Activated CD8-positive, alpha-beta T cell treated with anti-CD3 and anti-CD28 coated beads, Interleukin-2, amount 10 ng/mL, durations not matched to agents 7 days and 5 days (primary cell): ENCODE measurements at regions of chr11 and their contacts with region 1.

Region 1: DNA sequence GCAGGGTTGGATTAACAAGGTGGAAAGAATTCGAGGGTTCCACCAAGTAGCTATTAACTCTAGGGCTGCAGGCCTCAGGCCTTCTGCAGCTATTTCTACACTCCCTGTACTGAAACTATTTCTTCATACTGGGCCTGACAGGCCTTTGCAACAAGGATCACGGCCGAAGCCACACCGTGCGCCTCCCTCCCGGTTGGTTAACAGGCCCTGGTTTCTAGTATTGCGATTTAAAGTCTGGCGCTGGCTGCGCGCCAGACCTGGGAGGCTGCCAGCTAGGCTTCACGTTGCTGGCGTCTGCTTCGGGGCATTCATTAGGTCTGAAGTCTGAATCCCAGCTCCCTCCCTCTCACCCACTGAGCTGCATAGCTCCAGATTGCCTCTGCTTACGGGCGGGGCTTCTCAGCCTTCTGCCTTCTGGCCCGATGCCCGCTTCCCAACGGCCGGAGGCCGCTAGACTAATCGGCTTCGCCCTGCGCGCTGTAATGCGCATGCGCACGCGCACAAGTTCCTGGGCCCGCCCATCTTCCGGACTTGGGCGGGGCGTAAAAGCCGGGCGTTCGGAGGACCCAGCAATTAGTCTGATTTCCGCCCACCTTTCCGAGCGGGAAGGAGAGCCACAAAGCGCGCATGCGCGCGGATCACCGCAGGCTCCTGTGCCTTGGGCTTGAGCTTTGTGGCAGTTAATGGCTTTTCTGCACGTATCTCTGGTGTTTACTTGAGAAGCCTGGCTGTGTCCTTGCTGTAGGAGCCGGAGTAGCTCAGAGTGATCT is 1.6 kb downstream of the LDHA start:
- DNase-seq: peak; percentile 97
- ATAC-seq: peak; percentile 66
- H3K4me3 Mint-ChIP-seq: peak overlapping the region; percentile 99
- H3K27ac Mint-ChIP-seq: peak overlapping the region; percentile 98
- H3K4me1 Mint-ChIP-seq: peaks cover 56% of the 10 kb centered on the region
- H3K27me3 Mint-ChIP-seq: no peaks in the 10 kb centered on the region

Region 2: GRCh38 chr11:17939542-17939941 is 456.4 kb before region 1 on chr11:
- CTCF ChIA-PET with region 1: no interaction called
- POLR2A ChIA-PET with region 1: no interaction called
- DNase-seq: no peak
- ATAC-seq: no peak
- H3K4me3 Mint-ChIP-seq: no peak overlapping the region
- H3K27ac Mint-ChIP-seq: no peak overlapping the region
- H3K4me1 Mint-ChIP-seq: no peaks in the 10 kb centered on the region
- H3K27me3 Mint-ChIP-seq: no peaks in the 10 kb centered on the region

Region 3: GRCh38 chr11:18383388-18384156 is 12.3 kb before region 1 on chr11:
- CTCF ChIA-PET with region 1: interaction called, 33 read pairs
- POLR2A ChIA-PET with region 1: interaction called, 152 read pairs
- DNase-seq: peak; percentile 82
- ATAC-seq: peak; percentile 78
- H3K4me3 Mint-ChIP-seq: peak overlapping the region; percentile 69
- H3K27ac Mint-ChIP-seq: peak overlapping the region; percentile 99
- H3K4me1 Mint-ChIP-seq: peaks cover 51% of the 10 kb centered on the region
- H3K27me3 Mint-ChIP-seq: no peaks in the 10 kb centered on the region

Region 4: GRCh38 chr11:18408558-18409242 is 12.8 kb after region 1 on chr11:
- CTCF ChIA-PET with region 1: interaction called, 5 read pairs
- POLR2A ChIA-PET with region 1: interaction called, 19 read pairs
- DNase-seq: no peak
- ATAC-seq: no peak
- H3K4me3 Mint-ChIP-seq: no peak overlapping the region
- H3K27ac Mint-ChIP-seq: no peak overlapping the region
- H3K4me1 Mint-ChIP-seq: peaks cover 26% of the 10 kb centered on the region
- H3K27me3 Mint-ChIP-seq: peaks cover 2% of the 10 kb centered on the region

Region 5: DNA sequence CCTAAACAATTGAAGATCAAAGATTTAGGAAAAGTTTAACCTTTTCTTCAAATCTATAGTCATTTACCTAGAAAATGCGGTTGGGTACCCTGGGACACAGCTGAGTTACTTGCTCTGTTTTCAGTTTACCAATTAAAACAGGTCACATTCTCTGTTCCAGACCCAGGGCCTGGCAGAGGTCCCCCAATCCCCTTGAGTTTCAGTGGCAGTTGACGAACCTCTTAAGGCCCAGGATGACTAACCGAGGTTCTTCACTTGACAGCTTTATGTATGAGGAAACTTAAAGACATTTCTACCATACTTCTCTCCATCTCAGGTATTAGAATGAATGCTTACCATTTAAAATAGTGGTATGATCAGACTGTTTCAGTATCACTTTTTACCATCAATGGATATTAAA is 76.1 kb after region 1 on chr11:
- CTCF ChIA-PET with region 1: no interaction called
- POLR2A ChIA-PET with region 1: no interaction called
- DNase-seq: no peak
- ATAC-seq: no peak
- H3K4me3 Mint-ChIP-seq: no peak overlapping the region
- H3K27ac Mint-ChIP-seq: no peak overlapping the region
- H3K4me1 Mint-ChIP-seq: no peaks in the 10 kb centered on the region
- H3K27me3 Mint-ChIP-seq: no peaks in the 10 kb centered on the region

Region 6: DNA sequence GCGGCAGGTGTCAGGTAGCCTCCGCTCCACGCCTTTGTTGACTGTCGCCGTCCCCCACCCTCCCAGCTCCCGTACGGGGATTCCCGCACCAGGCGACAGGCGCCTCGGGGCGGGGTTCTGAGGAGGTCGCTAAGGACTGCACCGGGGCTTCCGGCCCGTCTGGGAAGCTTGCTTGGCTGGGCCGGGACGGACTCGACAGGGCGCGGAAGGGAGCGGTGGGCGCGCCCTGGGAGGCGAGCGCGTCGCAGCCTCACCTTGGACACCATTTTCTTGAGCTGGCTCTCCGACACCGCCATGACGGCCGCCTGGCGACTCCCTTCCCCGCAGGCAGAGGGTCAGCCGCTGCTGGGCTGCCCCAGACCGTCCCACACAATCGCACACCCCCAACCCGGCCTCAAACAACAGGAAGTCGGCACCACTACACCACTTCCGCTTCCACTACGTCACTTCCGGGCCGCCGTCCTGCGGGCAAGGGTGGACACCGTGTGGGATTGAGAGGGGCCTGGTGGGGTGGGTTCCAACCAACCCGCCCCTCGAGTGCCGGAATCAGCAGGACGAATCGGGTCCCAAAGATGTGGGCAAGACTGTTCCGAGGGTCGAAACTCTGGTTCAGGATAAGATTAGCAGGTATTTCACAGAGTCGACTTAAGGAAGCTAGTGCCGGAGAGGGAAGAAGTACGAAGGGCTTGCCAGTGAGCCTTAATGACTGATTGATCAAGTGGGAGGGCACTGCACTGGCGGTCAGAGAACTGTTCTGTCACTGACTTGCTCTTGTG is 130.8 kb after region 1 on chr11 and contains the start of gene TSG101:
- CTCF ChIA-PET with region 1: interaction called, 8 read pairs
- POLR2A ChIA-PET with region 1: interaction called, 29 read pairs
- DNase-seq: peak; percentile 93
- ATAC-seq: peak; percentile 81
- H3K4me3 Mint-ChIP-seq: peak within 1 kb of the TSS; percentile 99
- H3K27ac Mint-ChIP-seq: peak within 1 kb of the TSS; percentile 99
- H3K4me1 Mint-ChIP-seq: peaks cover 33% of the 10 kb centered on the region
- H3K27me3 Mint-ChIP-seq: no peaks in the 10 kb centered on the region
- total RNA-seq, gene TSG101: 33.5 to 48.7 TPM